ENCODE measurements at regions of chr10 and their contacts with region 1.

Region 1: DNA sequence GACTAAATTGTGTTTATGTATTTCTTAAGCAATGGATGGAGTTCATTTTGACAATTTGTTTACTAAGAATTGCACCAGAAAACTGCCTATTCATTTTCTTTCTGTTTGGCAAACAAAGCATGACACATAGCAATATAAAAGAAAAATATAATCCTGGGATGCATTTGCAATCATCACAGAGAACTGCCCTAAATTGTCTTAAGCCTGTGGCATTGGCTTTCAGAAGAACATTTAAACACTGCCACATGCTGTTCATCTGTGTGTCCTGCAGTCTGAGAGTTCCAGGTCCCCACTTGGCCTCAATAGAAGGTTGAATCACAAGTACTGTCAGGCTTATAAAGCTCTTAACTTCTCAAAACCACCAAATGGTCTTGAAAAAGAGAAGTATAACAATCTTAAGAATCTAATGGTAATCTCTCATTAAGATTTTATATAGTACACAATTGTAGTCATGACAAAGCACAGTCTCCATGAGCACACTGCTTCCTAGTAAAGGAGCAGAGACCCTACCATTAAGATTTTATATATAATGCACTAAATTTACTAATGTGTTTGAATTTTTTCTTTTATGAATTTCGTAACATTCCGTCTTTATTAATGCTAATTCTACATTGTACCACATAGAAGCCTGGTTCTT is 29.9 kb downstream of the RNLS start:
- DNase-seq: peak; percentile 55
- ATAC-seq: peak; percentile 91
- H3K4me3 Mint-ChIP-seq: no peak overlapping the region
- H3K27ac Mint-ChIP-seq: no peak overlapping the region
- H3K4me1 Mint-ChIP-seq: peaks cover 13% of the 10 kb centered on the region
- H3K27me3 Mint-ChIP-seq: no peaks in the 10 kb centered on the region

Region 2: DNA sequence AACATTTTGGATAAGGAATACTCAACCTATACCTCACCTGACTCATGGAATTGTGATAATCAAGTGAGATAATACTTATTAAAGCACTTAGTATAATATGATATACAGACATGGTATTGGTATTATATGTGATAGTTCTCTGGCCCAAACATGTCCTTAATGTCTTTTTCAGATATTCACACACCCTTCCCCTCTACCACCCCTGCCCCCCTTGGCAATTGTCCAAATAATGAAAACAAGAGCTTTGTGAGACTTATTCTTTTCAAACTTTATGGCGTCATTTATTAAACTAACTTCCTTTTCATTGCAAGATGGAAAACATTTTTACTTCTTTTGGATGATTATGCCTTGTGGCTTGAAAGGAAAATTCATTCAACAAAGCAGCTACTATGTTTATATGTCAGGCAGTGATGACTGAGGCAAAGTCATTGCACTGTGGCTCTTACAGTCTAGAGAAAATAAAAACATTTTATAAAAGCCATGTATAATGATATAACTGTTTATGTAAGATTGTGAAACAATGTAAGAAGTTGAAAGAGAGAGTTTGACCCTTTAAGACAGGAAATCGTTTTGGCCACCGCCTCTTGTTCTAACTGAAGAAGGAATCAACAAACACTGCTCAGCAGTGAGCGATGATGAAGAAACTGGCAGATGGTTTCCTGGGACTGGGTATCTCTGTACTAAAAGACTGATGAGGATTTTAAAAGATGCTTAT is 1021.2 kb before region 1 on chr10:
- CTCF ChIA-PET with region 1: no interaction called
- POLR2A ChIA-PET with region 1: no interaction called
- intact Hi-C with region 1: loop called in 1 of 2 experiments (anchors 5 kb)
- DNase-seq: no peak
- ATAC-seq: no peak
- H3K4me3 Mint-ChIP-seq: no peak overlapping the region
- H3K27ac Mint-ChIP-seq: no peak overlapping the region
- H3K4me1 Mint-ChIP-seq: peaks cover 12% of the 10 kb centered on the region
- H3K27me3 Mint-ChIP-seq: no peaks in the 10 kb centered on the region

Region 3: GRCh38 chr10:87659571-87660483 is 893.4 kb before region 1 on chr10 and contains the start of gene PAPSS2:
- CTCF ChIA-PET with region 1: interaction called, 3 read pairs
- POLR2A ChIA-PET with region 1: no interaction called
- intact Hi-C with region 1: loop called in 1 of 2 experiments (anchors 10 kb)
- DNase-seq: peak; percentile 56
- ATAC-seq: peak; percentile 24
- H3K4me3 Mint-ChIP-seq: peak within 1 kb of the TSS; percentile 65
- H3K27ac Mint-ChIP-seq: no peak within 1 kb of the TSS
- H3K4me1 Mint-ChIP-seq: peaks cover 8% of the 10 kb centered on the region
- H3K27me3 Mint-ChIP-seq: peaks cover 38% of the 10 kb centered on the region
- total RNA-seq, gene PAPSS2: 0.05 to 0.30 TPM

Region 4: GRCh38 chr10:87850742-87851205 is 702.5 kb before region 1 on chr10:
- CTCF ChIA-PET with region 1: interaction called, 14 read pairs
- POLR2A ChIA-PET with region 1: no interaction called
- intact Hi-C with region 1: loop called in 1 of 2 experiments (anchors 1 kb)
- DNase-seq: peak; percentile 64
- ATAC-seq: peak; percentile 91
- H3K4me3 Mint-ChIP-seq: no peak overlapping the region
- H3K27ac Mint-ChIP-seq: no peak overlapping the region
- H3K4me1 Mint-ChIP-seq: peaks cover 14% of the 10 kb centered on the region
- H3K27me3 Mint-ChIP-seq: peaks cover 2% of the 10 kb centered on the region

Region 5: GRCh38 chr10:88114368-88114767 is 438.9 kb before region 1 on chr10:
- CTCF ChIA-PET with region 1: no interaction called
- POLR2A ChIA-PET with region 1: no interaction called
- intact Hi-C with region 1: loop called (anchors 5 to 10 kb)
- DNase-seq: peak; percentile 47
- ATAC-seq: no peak
- H3K4me3 Mint-ChIP-seq: no peak overlapping the region
- H3K27ac Mint-ChIP-seq: no peak overlapping the region
- H3K4me1 Mint-ChIP-seq: peaks cover 9% of the 10 kb centered on the region
- H3K27me3 Mint-ChIP-seq: peaks cover 15% of the 10 kb centered on the region

Region 6: GRCh38 chr10:88401671-88402347 is 151.4 kb before region 1 on chr10:
- CTCF ChIA-PET with region 1: no interaction called
- POLR2A ChIA-PET with region 1: no interaction called
- intact Hi-C with region 1: loop called (anchors 1 to 5 kb)
- DNase-seq: no peak
- ATAC-seq: peak; percentile 81
- H3K4me3 Mint-ChIP-seq: no peak overlapping the region
- H3K27ac Mint-ChIP-seq: no peak overlapping the region
- H3K4me1 Mint-ChIP-seq: peaks cover 7% of the 10 kb centered on the region
- H3K27me3 Mint-ChIP-seq: peaks cover 3% of the 10 kb centered on the region

Region 7: DNA sequence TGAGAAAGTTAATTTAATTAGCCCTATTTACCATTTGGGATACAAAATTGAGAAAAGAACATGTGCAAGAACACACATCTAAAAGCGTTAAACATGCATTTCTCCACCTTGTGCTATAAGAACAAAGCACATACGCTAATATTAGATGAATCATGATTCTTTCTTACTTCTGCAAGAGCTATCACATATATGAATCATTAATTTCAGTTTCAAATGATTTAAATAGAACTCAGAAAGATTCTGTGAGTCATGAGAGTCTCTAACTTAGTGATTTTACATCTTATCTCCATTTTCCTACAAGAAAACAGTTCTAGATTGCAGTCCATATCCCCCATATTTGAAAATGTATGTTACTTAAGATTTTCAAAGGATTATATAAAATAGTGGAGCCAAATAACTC is 144.0 kb before region 1 on chr10:
- CTCF ChIA-PET with region 1: no interaction called
- POLR2A ChIA-PET with region 1: no interaction called
- intact Hi-C with region 1: loop called in 1 of 2 experiments (anchors 5 kb)
- DNase-seq: no peak
- ATAC-seq: peak; percentile 89
- H3K4me3 Mint-ChIP-seq: no peak overlapping the region
- H3K27ac Mint-ChIP-seq: no peak overlapping the region
- H3K4me1 Mint-ChIP-seq: peaks cover 3% of the 10 kb centered on the region
- H3K27me3 Mint-ChIP-seq: peaks cover 4% of the 10 kb centered on the region

Region 8: GRCh38 chr10:88538038-88538437 is 15.2 kb before region 1 on chr10:
- CTCF ChIA-PET with region 1: no interaction called
- POLR2A ChIA-PET with region 1: no interaction called
- intact Hi-C with region 1: no loop called
- DNase-seq: no peak
- ATAC-seq: no peak
- H3K4me3 Mint-ChIP-seq: no peak overlapping the region
- H3K27ac Mint-ChIP-seq: no peak overlapping the region
- H3K4me1 Mint-ChIP-seq: no peaks in the 10 kb centered on the region
- H3K27me3 Mint-ChIP-seq: no peaks in the 10 kb centered on the region

Measured in activated CD4-positive, alpha-beta T cell treated with anti-CD3 and anti-CD28 coated beads for 36 hours (primary cell).